WTC11 (cell line): ENCODE measurements at regions of chr1 and their contacts with region 1.

Region 1: GRCh38 chr1:234111458-234112142 is 207.1 kb downstream of the SLC35F3 start:
- DNase-seq: peak; percentile 76
- ATAC-seq: peak; percentile 99
- H3K4me3 Mint-ChIP-seq: no peak overlapping the region
- H3K27ac Mint-ChIP-seq: peak overlapping the region; percentile 18; the same call in 1 of the 2 replicates
- H3K4me1 Mint-ChIP-seq: peaks cover 5% of the 10 kb centered on the region; the same call in 1 of the 2 replicates
- H3K27me3 Mint-ChIP-seq: peaks cover 5% of the 10 kb centered on the region
- CTCF ChIP-seq: no peak

Region 2: GRCh38 chr1:233367057-233367759 is 744.4 kb before region 1 on chr1:
- CTCF ChIA-PET with region 1: interaction called, 11 read pairs
- POLR2A ChIA-PET with region 1: no interaction called
- DNase-seq: peak; percentile 37
- ATAC-seq: peak; percentile 89
- H3K4me3 Mint-ChIP-seq: peak overlapping the region; percentile 42
- H3K27ac Mint-ChIP-seq: peak overlapping the region; percentile 97
- H3K4me1 Mint-ChIP-seq: peaks cover 61% of the 10 kb centered on the region
- H3K27me3 Mint-ChIP-seq: no peaks in the 10 kb centered on the region
- CTCF ChIP-seq: no peak

Region 3: DNA sequence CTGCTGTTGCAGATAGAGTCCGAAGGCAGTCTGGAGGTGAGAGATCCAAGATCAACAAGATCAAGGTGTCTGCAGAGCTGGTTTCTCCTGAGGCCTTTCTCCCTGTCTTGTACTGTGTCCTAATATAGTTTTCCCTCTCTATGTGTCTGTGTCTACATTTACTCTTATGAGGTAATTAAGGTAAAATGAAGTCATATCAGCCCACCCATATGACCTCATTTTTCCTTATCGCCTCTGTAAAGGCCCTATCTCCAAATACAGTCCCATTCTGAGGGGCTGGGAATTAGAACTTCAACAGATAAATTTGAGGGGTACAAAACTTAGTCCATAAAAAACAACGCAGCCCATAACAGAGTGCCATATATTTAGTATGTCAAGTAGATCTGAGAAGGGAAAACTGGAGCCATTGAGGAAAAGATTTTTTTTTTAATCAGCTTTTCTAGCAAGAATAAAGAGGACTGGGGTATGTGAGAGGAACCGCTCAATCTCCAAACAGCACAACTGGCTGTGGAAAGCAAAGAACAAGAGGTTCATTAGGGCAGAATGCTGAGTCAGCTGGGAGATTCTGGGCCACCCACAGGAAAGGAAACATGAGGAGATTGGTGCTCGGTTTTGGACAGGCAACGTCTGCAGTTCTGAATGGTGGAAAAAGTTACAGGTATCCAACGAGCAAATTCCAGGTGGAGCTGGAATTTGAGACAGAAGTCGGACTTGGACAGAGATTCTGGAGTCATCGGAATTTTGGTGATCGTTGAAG is 718.3 kb before region 1 on chr1:
- CTCF ChIA-PET with region 1: interaction called, 11 read pairs
- POLR2A ChIA-PET with region 1: no interaction called
- DNase-seq: no peak
- ATAC-seq: no peak
- H3K4me3 Mint-ChIP-seq: no peak overlapping the region
- H3K27ac Mint-ChIP-seq: 0 out of 2 replicates have a peak overlapping the region, but pooled peaks have one; percentile 1
- H3K4me1 Mint-ChIP-seq: peaks cover 24% of the 10 kb centered on the region
- H3K27me3 Mint-ChIP-seq: no peaks in the 10 kb centered on the region
- CTCF ChIP-seq: no peak

Region 4: GRCh38 chr1:234039603-234040002 is 72.0 kb before region 1 on chr1:
- CTCF ChIA-PET with region 1: no interaction called
- POLR2A ChIA-PET with region 1: no interaction called
- DNase-seq: no peak
- ATAC-seq: no peak
- H3K4me3 Mint-ChIP-seq: no peak overlapping the region
- H3K27ac Mint-ChIP-seq: no peak overlapping the region
- H3K4me1 Mint-ChIP-seq: no peaks in the 10 kb centered on the region
- H3K27me3 Mint-ChIP-seq: no peaks in the 10 kb centered on the region
- CTCF ChIP-seq: no peak

Region 5: GRCh38 chr1:234096161-234096770 is 15.3 kb before region 1 on chr1:
- CTCF ChIA-PET with region 1: no interaction called
- POLR2A ChIA-PET with region 1: no interaction called
- DNase-seq: no peak
- ATAC-seq: no peak
- H3K4me3 Mint-ChIP-seq: no peak overlapping the region
- H3K27ac Mint-ChIP-seq: no peak overlapping the region
- H3K4me1 Mint-ChIP-seq: no peaks in the 10 kb centered on the region
- H3K27me3 Mint-ChIP-seq: peaks cover 3% of the 10 kb centered on the region; the same call in 1 of the 2 replicates
- CTCF ChIP-seq: no peak